ENCODE measurements at regions of chr3 and their contacts with region 1.

Region 1: GRCh38 chr3:179147873-179148615 is at the start of gene PIK3CA:
- DNase-seq: peak; percentile 96
- ATAC-seq: peak; percentile 83
- H3K4me3 Mint-ChIP-seq: peak within 1 kb of the TSS; percentile 99
- H3K27ac Mint-ChIP-seq: peak within 1 kb of the TSS; percentile 99
- H3K4me1 Mint-ChIP-seq: peaks cover 39% of the 10 kb centered on the region
- H3K27me3 Mint-ChIP-seq: peaks cover 4% of the 10 kb centered on the region
- CTCF ChIP-seq: no peak
- total RNA-seq, gene PIK3CA: 14.1 to 20.8 TPM

Region 2: DNA sequence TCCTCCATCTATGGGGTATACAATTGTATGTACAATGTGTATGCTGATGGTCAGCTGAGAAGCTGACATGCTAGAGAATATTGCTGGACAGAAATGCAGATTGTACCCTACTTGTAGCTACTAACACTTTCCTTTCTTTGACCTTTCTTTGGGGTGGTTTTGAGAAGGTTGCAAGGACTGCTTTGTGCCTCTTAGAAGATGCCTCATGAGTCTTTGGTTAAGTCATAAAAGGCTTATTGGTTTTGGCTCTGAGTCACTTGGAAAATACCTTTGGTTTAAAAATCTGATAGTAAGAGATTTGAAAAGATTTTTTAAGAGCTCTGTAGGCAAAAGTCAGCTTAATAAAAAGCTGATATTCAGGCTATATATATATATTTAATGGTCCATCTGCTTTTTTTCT is 147.9 kb before region 1 on chr3:
- CTCF ChIA-PET with region 1: no interaction called
- POLR2A ChIA-PET with region 1: interaction called, 3 read pairs
- intact Hi-C with region 1: loop called (anchors 5 kb)
- DNase-seq: peak; percentile 10
- ATAC-seq: peak; percentile 90
- H3K4me3 Mint-ChIP-seq: no peak overlapping the region
- H3K27ac Mint-ChIP-seq: peak overlapping the region; percentile 80
- H3K4me1 Mint-ChIP-seq: peaks cover 20% of the 10 kb centered on the region
- H3K27me3 Mint-ChIP-seq: peaks cover 1% of the 10 kb centered on the region
- CTCF ChIP-seq: no peak

Region 3: DNA sequence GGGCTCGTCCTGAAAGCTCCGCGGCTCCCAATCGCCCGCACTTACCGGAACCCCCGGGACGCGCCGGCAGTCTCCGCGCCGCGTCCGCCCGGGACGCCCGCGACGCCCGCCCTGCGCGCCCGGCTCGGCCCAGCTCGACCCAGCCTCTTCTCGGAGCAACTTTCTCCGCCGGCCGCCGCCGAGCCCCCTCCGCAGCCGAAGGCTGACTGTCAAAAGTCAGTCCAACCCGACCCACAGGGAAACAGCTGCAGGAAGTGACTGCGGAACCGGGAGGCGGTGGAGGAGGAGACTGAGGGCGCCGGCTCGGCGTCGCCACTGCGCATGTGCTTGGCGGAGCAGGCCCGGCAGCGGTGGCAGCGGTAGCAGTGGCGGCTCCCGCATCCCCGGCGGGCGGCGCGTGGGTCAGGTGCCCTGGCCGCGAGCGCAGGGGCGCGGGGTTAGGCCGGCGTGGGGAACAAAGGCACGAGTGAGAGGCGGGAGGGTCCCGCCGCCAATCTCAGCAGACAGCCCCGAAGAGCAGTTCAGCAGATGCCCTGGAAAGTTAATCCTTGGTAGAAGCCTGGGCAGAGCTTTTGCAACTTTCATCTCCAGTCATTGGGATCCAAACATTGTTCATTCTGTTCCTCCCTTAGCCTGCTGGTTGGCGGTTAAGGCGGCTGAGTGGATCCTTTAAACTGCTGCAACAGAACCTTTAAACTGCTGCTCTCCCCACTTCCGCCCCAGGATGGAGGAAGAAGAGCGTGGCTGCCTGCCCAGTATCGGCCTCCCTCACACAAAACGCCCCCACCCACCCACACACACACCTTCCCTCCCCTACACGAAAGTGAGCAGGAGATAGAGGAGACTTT is 76.3 kb before region 1 on chr3 and contains the start of gene ZMAT3:
- CTCF ChIA-PET with region 1: interaction called, 5 read pairs
- POLR2A ChIA-PET with region 1: interaction called, 6 read pairs
- intact Hi-C with region 1: loop called (anchors 2 kb)
- DNase-seq: peak; percentile 85
- ATAC-seq: peak; percentile 85
- H3K4me3 Mint-ChIP-seq: peak within 1 kb of the TSS; percentile 97
- H3K27ac Mint-ChIP-seq: peak within 1 kb of the TSS; percentile 93
- H3K4me1 Mint-ChIP-seq: peaks cover 20% of the 10 kb centered on the region
- H3K27me3 Mint-ChIP-seq: no peaks in the 10 kb centered on the region
- CTCF ChIP-seq: no peak
- total RNA-seq, gene ZMAT3: 14.6 to 15.9 TPM

Region 4: GRCh38 chr3:179091113-179091512 is 56.9 kb before region 1 on chr3:
- CTCF ChIA-PET with region 1: no interaction called
- POLR2A ChIA-PET with region 1: no interaction called
- intact Hi-C with region 1: no loop called
- DNase-seq: no peak
- ATAC-seq: no peak
- H3K4me3 Mint-ChIP-seq: no peak overlapping the region
- H3K27ac Mint-ChIP-seq: no peak overlapping the region
- H3K4me1 Mint-ChIP-seq: peaks cover 14% of the 10 kb centered on the region
- H3K27me3 Mint-ChIP-seq: no peaks in the 10 kb centered on the region
- CTCF ChIP-seq: no peak

Region 5: GRCh38 chr3:179181021-179181472 is 33.0 kb after region 1 on chr3:
- CTCF ChIA-PET with region 1: interaction called, 17 read pairs
- POLR2A ChIA-PET with region 1: interaction called, 13 read pairs
- intact Hi-C with region 1: loop called (anchors 1 kb)
- DNase-seq: no peak
- ATAC-seq: peak; percentile 82
- H3K4me3 Mint-ChIP-seq: peak overlapping the region; percentile 32
- H3K27ac Mint-ChIP-seq: no peak overlapping the region
- H3K4me1 Mint-ChIP-seq: peaks cover 55% of the 10 kb centered on the region
- H3K27me3 Mint-ChIP-seq: no peaks in the 10 kb centered on the region
- CTCF ChIP-seq: no peak

Region 6: DNA sequence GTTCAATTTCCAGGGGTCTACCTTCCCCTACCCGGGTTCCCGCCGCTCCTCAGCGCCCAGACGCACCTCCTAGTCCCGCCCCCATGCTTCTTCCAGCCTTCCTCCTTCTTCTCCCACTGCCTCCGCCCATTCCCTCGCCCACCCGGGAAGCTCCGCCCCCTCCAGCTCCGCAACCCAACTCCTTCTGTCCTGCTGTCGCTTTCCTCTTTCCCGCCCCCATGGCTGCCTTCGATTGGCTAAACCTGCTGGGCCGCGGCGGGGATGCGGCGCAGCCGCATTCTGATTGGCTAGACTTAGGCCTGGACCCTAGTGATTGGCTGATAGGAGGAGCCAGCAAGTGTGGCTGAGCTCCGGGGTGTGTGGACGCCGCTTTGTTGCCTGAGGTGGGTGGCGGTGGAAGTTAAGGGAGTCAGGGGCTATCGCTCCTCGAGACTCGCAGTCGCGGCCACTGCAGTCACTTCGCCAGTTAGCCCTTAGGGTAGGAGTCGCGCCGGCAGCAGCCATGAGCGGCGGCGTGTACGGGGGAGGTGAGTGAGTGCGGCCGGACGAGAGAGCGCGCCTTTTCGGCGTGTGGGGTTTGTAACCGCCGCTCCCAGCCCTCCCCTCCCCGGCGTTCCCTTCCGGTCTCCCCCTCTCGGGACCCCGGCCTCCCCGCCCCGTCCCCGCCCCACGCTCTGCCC is 414.7 kb after region 1 on chr3 and contains the start of gene ACTL6A:
- CTCF ChIA-PET with region 1: no interaction called
- POLR2A ChIA-PET with region 1: interaction called, 10 read pairs
- intact Hi-C with region 1: no loop called
- DNase-seq: peak; percentile 99
- ATAC-seq: peak; percentile 91
- H3K4me3 Mint-ChIP-seq: peak within 1 kb of the TSS; percentile 86
- H3K27ac Mint-ChIP-seq: peak within 1 kb of the TSS; percentile 99
- H3K4me1 Mint-ChIP-seq: peaks cover 28% of the 10 kb centered on the region
- H3K27me3 Mint-ChIP-seq: peaks cover 3% of the 10 kb centered on the region
- CTCF ChIP-seq: no peak
- total RNA-seq, gene ACTL6A: 87.1 to 88.4 TPM